Activated T-helper 2 cell treated with anti-CD3 and anti-CD28 coated beads, Interferon-gamma antibody, Interleukin-2, Interleukin-4, amounts not matched to agents 10 μg/mL and 5 μg/mL and 100 μg/mL, durations not matched to agents 14 hours and 24 hours and 36 hours (primary cell): ENCODE measurements at regions of chr20 and their contacts with region 1.

Region 1: GRCh38 chr20:50165684-50166554 is 12.4 kb upstream of the PEDS1 start:
- DNase-seq: peak; percentile 68
- H3K4me3 Mint-ChIP-seq: peak overlapping the region; percentile 74
- H3K27ac Mint-ChIP-seq: peak overlapping the region; percentile 91
- H3K4me1 Mint-ChIP-seq: peaks cover 13% of the 10 kb centered on the region
- H3K27me3 Mint-ChIP-seq: no peaks in the 10 kb centered on the region

Region 2: DNA sequence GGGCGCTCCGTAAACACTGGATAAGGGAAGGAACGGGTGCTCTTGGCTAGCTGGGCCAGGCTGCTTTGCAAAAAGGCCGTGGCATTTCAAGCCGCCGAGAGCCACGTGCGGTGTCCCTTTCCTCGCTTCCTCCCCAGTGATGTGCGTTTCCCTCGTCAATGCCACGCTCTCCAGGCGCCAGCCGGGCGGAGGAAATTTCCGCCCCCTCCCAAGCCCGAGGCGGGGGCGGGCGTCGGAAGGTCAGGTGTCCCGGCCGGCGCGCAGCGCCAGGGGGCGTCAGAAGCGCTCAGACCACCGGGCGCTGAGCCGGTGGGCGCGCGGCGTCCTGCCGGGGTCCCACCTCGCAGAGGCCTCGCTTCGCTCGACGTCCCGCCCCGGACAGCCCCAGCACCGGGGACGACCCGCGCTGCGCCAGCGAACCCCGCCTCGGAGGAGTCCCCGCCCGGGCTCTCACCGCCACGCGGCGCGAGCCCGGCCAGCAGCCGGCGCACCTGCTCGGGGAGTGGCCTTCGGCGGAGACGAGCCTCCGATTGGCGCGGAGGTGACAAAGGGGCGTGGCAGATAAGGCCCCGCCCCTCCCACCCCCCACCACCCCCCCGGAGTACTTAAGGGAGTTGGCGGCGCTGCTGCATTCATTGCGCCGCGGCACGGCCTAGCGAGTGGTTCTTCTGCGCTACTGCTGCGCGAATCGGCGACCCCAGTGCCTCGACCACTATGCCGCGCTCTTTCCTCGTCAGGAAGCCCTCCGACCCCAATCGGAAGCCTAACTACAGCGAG is 183.4 kb before region 1 on chr20 and contains the start of gene SNAI1:
- intact Hi-C with region 1: loop called (anchors 2 kb)
- DNase-seq: peak; percentile 77
- H3K4me3 Mint-ChIP-seq: peak within 1 kb of the TSS; percentile 66
- H3K27ac Mint-ChIP-seq: peak within 1 kb of the TSS; percentile 70
- H3K4me1 Mint-ChIP-seq: peaks cover 13% of the 10 kb centered on the region
- H3K27me3 Mint-ChIP-seq: peaks cover 31% of the 10 kb centered on the region
- total RNA-seq, gene SNAI1: 1.3 and 1.6 TPM in 2 replicates

Region 3: GRCh38 chr20:50120897-50121693 is 44.8 kb before region 1 on chr20:
- intact Hi-C with region 1: loop called (anchors 1 kb)
- DNase-seq: peak; percentile 40
- H3K4me3 Mint-ChIP-seq: no peak overlapping the region
- H3K27ac Mint-ChIP-seq: no peak overlapping the region
- H3K4me1 Mint-ChIP-seq: peaks cover 4% of the 10 kb centered on the region
- H3K27me3 Mint-ChIP-seq: no peaks in the 10 kb centered on the region

Region 4: DNA sequence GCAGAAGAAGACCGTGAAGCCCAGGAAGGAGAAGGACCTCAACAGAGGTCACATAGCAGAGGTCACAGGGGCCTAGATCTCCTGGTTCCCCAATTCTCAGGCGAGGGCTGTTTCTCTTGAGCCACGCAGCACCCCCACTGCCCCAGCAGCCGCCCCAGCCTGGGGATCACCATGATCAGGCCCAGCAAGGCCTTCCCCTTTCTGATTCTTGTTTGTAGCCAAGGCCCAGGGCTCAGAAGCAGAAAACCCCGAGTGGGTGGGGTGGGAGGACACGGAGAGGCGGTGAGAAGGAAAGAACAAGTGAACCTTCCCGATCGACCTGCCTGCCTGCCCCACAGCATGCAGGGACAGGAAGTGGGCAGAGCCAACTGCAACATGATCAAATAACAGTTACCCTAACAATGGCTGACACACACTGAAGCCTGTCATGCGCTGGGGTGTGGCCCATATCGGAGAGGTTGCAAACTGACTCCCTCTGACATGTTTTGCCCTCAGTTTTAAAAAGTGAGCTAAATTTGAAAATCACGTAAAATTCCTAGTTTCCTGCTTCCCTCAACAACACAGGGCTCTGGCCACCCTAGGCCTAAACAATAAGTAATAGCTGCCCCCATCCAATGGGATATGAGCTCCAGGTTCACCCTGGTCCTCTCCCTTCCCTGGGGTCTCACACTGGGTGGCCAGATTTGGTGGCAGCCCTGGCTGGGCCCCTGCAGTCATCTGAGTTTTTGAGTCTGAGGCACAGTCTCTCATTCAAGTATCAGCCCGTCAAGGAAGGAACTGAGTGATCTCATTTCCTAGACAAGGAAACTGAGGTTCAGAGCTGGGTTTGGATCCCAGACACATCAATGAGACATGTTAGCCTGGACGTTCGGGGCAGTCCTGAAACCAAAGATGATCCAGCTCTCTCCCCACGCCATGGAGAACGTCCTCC is 18.9 kb before region 1 on chr20:
- intact Hi-C with region 1: loop called (anchors 1 kb)
- DNase-seq: peak; percentile 76
- H3K4me3 Mint-ChIP-seq: peak overlapping the region; percentile 75
- H3K27ac Mint-ChIP-seq: peak overlapping the region; percentile 96
- H3K4me1 Mint-ChIP-seq: peaks cover 52% of the 10 kb centered on the region
- H3K27me3 Mint-ChIP-seq: no peaks in the 10 kb centered on the region

Region 5: DNA sequence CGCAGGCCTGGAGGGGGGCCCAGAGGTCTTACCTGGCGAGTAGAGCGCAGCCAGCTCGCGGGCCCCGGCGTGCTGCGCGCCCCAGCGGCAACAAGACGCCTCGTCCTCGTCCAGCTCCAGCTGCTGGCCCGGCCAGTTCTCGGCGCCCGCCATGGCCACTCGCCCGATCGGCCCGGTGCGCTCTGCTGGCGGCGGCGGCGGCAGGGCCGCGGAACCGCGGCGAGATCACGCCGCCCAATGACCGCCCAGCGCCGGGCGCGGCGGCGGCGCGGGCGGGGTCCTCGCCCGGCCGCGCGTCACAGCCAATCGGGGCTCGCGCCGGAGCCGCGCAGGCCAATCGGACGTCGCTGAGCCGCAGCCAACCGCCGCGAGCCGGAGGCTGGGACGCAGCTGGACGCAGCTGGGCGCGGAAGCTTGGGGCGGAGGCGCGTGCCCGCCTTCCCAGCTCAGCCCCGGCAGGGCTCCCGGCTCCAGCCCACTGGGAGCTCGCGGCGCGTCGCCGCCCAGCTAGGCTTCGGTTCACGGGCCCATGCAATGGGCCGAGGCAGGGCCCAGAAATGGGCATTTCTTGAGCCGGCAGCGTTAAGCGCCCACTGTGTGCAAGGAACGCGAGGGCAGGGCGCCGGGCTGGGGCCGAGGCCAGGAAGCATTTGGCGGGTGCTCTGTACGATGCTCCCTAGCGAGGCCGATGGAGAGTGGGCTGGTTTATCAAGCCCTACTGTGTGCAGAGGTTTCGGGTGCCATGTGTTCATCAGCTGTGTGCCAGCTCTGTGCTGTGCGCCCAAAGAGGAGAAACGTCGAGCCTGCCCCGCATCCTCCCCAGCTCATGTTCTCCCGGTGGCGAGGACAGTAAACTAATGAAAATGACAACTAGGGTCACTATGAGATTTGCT is 12.2 kb before region 1 on chr20 and contains the start of gene PEDS1:
- intact Hi-C with region 1: loop called (anchors 1 kb)
- DNase-seq: peak; percentile 83
- H3K4me3 Mint-ChIP-seq: peak within 1 kb of the TSS; percentile 78
- H3K27ac Mint-ChIP-seq: peak within 1 kb of the TSS; percentile 82
- H3K4me1 Mint-ChIP-seq: peaks cover 32% of the 10 kb centered on the region
- H3K27me3 Mint-ChIP-seq: no peaks in the 10 kb centered on the region
- total RNA-seq, gene PEDS1: 26.5 and 29.5 TPM in 2 replicates